CD8-positive, alpha-beta memory T cell (primary cell): ENCODE measurements at regions of chr6 and their contacts with region 1.

Region 1: GRCh38 chr6:43402820-43403219 is 24.5 kb upstream of the ABCC10 start:
- DNase-seq: no peak
- H3K4me3 ChIP-seq: no peak overlapping the region
- H3K4me3 Mint-ChIP-seq: no peak overlapping the region
- H3K27ac ChIP-seq: no peak overlapping the region
- H3K27ac Mint-ChIP-seq: no peak overlapping the region
- H3K4me1 ChIP-seq: no peaks in the 10 kb centered on the region
- H3K4me1 Mint-ChIP-seq: peaks cover 0 to 2% (median 2%) of the 10 kb centered on the region in 3 donors
- H3K27me3 ChIP-seq: no peaks in the 10 kb centered on the region
- H3K27me3 Mint-ChIP-seq: peaks cover 5 to 26% of the 10 kb centered on the region in 2 donors

Region 2: DNA sequence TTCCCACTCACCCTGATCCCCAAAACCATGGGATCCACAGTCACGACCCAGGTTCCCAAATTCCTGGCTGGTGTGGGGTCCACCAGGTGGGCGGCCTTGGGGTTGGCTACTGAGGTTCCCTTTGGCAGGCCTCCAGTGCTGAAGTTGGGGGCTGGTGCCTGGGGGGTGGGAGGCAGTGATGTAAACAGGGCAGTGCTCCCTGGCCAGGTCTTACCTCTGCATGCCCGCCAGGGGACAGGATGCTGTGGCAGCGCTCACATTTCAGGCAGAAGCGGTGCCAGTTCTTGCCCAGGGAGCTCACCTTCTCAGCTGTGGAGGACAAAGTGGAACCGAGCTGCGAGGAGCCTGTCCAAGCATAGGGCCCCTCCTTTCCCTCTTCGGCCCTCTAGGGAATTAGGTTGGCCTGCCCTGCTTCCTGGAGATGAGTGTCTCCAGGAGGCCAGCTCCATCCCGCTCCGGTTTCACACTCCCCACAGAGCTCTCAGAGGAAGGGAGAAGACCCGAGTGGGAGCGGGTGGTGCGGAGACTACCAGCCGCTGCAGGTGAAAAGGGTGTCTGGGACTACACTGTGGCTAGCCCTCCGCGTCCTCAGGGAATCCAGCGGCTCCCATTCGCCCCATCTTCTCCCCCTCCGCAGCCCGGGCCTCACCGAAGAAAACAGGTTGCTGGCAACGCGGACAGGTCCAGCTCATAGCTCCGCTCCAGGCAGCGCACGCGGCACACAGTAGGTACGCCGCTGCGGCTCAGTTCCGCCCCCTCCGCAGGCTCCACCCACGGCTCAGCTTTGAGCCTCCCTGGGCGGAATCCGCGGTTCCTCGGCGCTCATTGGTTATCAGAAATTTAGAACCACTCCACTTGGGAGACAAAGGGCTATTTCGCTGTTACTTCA is 94.5 kb before region 1 on chr6 and contains the start of gene CRIP3:
- CTCF ChIA-PET with region 1: interaction called, 18 read pairs
- POLR2A ChIA-PET with region 1: interaction called, 5 read pairs
- DNase-seq: peak; percentile 22 to 61 (median 28)
- H3K4me3 ChIP-seq: peak within 1 kb of the TSS; percentile 64
- H3K4me3 Mint-ChIP-seq: peak within 1 kb of the TSS; percentile 75 to 83 (median 78)
- H3K27ac ChIP-seq: no peak within 1 kb of the TSS
- H3K27ac Mint-ChIP-seq: peak within 1 kb of the TSS in 4 of 8 donors; percentile 38 to 61 (median 54)
- H3K4me1 ChIP-seq: peaks cover 15% of the 10 kb centered on the region
- H3K4me1 Mint-ChIP-seq: peaks cover 3 to 19% (median 8%) of the 10 kb centered on the region in 3 donors
- H3K27me3 ChIP-seq: no peaks in the 10 kb centered on the region
- H3K27me3 Mint-ChIP-seq: peaks cover 8 to 13% of the 10 kb centered on the region in 2 donors
- total RNA-seq, gene CRIP3: 0.63 TPM in 1 of 2 experiments, not detected in the other

Region 3: GRCh38 chr6:43389730-43390295 is 13.0 kb before region 1 on chr6:
- CTCF ChIA-PET with region 1: interaction called, 30 read pairs
- POLR2A ChIA-PET with region 1: no interaction called
- DNase-seq: no peak
- H3K4me3 ChIP-seq: no peak overlapping the region
- H3K4me3 Mint-ChIP-seq: no peak overlapping the region
- H3K27ac ChIP-seq: no peak overlapping the region
- H3K27ac Mint-ChIP-seq: no peak overlapping the region
- H3K4me1 ChIP-seq: peaks cover 36% of the 10 kb centered on the region
- H3K4me1 Mint-ChIP-seq: peaks cover 46 to 56% (median 52%) of the 10 kb centered on the region in 3 donors
- H3K27me3 ChIP-seq: no peaks in the 10 kb centered on the region
- H3K27me3 Mint-ChIP-seq: peaks cover 7 to 16% of the 10 kb centered on the region in 2 donors